Posterior cingulate gyrus (tissue), 11 donors: ENCODE measurements at regions of chr6 and their contacts with region 1.

Region 1: GRCh38 chr6:123715006-123715875 is 78.5 kb upstream of the TRDN start:
- DNase-seq: no peak

Region 2: DNA sequence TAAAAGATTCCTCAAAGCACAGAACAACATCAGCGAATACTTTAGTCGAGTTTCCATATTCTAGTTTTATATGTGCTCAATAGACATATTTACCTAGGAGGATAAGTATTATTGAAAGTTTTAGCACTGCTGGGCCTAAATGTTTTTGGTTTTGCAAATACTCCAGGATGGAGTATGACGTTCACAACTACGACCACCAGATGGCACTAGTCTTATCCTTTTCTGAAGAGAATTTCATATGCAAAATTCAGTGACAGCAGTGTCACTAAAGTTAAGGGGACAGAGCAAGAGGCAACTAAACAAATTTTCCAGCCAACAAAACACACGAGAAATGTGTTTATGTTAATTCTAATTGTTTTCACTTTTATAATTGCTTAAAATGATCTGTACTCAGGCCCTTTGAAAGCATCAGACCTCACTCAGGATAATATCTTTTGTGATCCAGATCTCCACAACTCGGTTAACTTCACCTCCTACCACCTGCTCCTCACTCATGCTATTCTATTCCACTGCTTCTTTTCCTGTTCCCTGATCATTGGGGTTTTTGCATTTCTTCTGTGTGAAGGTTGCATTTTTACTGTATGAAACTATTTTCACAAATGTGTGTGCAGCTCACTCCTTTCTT is 299.3 kb before region 1 on chr6:
- intact Hi-C with region 1: loop called (anchors 1 kb)
- DNase-seq: peak in 5 of 10 donors; percentile 26 to 64 (median 59)

Region 3: DNA sequence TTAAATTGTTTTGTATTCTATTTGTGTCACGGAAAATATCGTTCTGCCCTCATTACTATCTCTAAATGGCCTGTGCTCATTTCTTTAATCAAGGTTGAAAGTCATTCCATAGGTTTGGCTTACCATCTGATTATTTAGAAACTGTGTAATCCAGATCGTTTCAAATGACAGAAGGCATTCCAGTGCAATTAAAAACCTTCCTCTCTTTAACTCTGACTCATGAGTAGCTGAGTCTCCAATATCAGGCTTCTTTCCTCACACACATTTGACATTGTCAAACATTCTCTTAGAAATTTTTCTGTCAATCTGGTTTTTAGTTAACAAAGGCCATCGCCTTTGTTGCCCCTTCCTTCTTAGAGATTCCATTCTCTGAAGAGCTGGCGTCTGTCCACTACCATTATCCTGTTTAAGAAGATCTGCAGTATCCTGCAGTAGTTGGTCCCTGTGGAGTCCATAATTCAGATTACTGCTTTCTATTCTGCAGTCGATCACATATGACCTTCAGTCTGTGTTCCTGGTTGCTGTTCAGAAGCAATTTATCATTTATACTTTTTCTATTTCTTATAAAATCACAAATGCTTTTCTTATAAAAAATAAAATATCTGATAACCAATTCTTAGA is 74.6 kb before region 1 on chr6:
- intact Hi-C with region 1: no loop called
- DNase-seq: no peak

Region 4: GRCh38 chr6:124190256-124190655 is 475.0 kb after region 1 on chr6:
- intact Hi-C with region 1: no loop called
- DNase-seq: no peak